ENCODE measurements at regions of chr1 and their contacts with region 1.

Region 1: GRCh38 chr1:42173155-42173933 is 8.8 kb upstream of the GUCA2A start:
- DNase-seq: peak; percentile 28 to 76 (median 57)
- ATAC-seq: peak; percentile 85
- H3K4me3 ChIP-seq: no peak overlapping the region
- H3K4me3 Mint-ChIP-seq: no peak overlapping the region
- H3K27ac ChIP-seq: no peak overlapping the region
- H3K27ac Mint-ChIP-seq: peak overlapping the region in 2 of 9 donors; percentile 17 to 71
- H3K4me1 ChIP-seq: no peaks in the 10 kb centered on the region
- H3K4me1 Mint-ChIP-seq: peaks cover 0 to 3% (median 0%) of the 10 kb centered on the region in 7 donors
- H3K27me3 ChIP-seq: no peaks in the 10 kb centered on the region
- H3K27me3 Mint-ChIP-seq: no peaks in the 10 kb centered on the region

Region 2: GRCh38 chr1:41455479-41456332 is 717.6 kb before region 1 on chr1:
- CTCF ChIA-PET with region 1: no interaction called
- POLR2A ChIA-PET with region 1: no interaction called
- intact Hi-C with region 1: no loop called
- DNase-seq: no peak
- ATAC-seq: no peak
- H3K4me3 ChIP-seq: no peak overlapping the region
- H3K4me3 Mint-ChIP-seq: no peak overlapping the region
- H3K27ac ChIP-seq: no peak overlapping the region
- H3K27ac Mint-ChIP-seq: no peak overlapping the region
- H3K4me1 ChIP-seq: no peaks in the 10 kb centered on the region
- H3K4me1 Mint-ChIP-seq: peaks cover 0 to 2% (median 0%) of the 10 kb centered on the region in 7 donors
- H3K27me3 ChIP-seq: no peaks in the 10 kb centered on the region
- H3K27me3 Mint-ChIP-seq: peaks cover 0 to 11% (median 0%) of the 10 kb centered on the region in 5 donors

Region 3: GRCh38 chr1:41516168-41517061 is 656.9 kb before region 1 on chr1:
- CTCF ChIA-PET with region 1: interaction called, 3 read pairs
- POLR2A ChIA-PET with region 1: no interaction called
- intact Hi-C with region 1: loop called in 1 of 2 experiments (anchors 1 kb)
- DNase-seq: peak in 8 of 9 donors; percentile 6 to 76 (median 42)
- ATAC-seq: peak; percentile 94
- H3K4me3 ChIP-seq: no peak overlapping the region
- H3K4me3 Mint-ChIP-seq: peak overlapping the region in 7 of 10 donors; percentile 47 to 76 (median 58)
- H3K27ac ChIP-seq: no peak overlapping the region
- H3K27ac Mint-ChIP-seq: no peak overlapping the region
- H3K4me1 ChIP-seq: no peaks in the 10 kb centered on the region
- H3K4me1 Mint-ChIP-seq: peaks cover 0 to 13% (median 7%) of the 10 kb centered on the region in 7 donors
- H3K27me3 ChIP-seq: no peaks in the 10 kb centered on the region
- H3K27me3 Mint-ChIP-seq: no peaks in the 10 kb centered on the region

Region 4: GRCh38 chr1:41812051-41812450 is 361.3 kb before region 1 on chr1:
- CTCF ChIA-PET with region 1: interaction called, 6 read pairs
- POLR2A ChIA-PET with region 1: no interaction called
- intact Hi-C with region 1: loop called (anchors 1 to 2 kb)
- DNase-seq: peak in 6 of 9 donors; percentile 23 to 63 (median 47)
- ATAC-seq: peak; percentile 77
- H3K4me3 ChIP-seq: no peak overlapping the region
- H3K4me3 Mint-ChIP-seq: peak overlapping the region in 1 of 10 donors; percentile 29
- H3K27ac ChIP-seq: no peak overlapping the region
- H3K27ac Mint-ChIP-seq: peak overlapping the region in 2 of 9 donors; percentile 21 to 66
- H3K4me1 ChIP-seq: peaks cover 5 to 28% of the 10 kb centered on the region in 2 donors
- H3K4me1 Mint-ChIP-seq: peaks cover 17 to 48% (median 26%) of the 10 kb centered on the region in 7 donors
- H3K27me3 ChIP-seq: no peaks in the 10 kb centered on the region
- H3K27me3 Mint-ChIP-seq: no peaks in the 10 kb centered on the region

Region 5: DNA sequence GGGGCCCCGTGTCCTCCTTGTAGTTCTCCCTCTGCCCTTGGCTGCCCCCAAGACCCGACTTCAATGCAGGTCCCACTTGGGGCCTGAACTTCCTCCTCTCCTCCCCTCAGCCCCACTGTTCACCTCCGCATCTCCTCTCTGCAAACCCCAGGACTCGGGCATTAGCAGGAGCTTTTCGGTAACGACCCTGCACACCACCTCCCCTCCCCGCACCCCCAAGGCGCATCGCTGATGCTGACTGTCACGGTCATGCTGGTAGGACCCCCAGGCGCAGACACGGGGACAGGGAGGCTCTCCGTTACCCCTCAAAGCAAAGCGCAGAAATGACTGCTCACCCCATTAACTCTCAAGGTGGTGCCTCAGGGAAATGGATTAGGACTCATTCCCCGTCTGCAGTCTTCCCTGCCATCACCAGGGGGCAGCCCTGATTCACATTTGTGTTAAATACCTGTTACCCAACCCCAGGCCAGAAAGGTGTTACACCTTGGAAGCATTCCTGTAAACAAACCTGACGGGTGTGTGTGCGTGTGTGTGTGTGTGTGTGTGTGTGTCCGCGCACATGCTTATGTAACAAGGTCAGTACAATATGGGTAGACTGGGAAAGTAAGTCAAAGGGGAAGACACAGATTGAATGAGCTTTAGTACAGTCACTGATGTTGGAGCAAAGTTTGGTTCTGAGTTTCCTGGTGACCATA is 26.6 kb before region 1 on chr1:
- CTCF ChIA-PET with region 1: interaction called, 4 read pairs
- POLR2A ChIA-PET with region 1: no interaction called
- intact Hi-C with region 1: loop called (anchors 1 kb)
- DNase-seq: peak; percentile 30 to 71 (median 61)
- ATAC-seq: peak; percentile 74
- H3K4me3 ChIP-seq: no peak overlapping the region
- H3K4me3 Mint-ChIP-seq: no peak overlapping the region
- H3K27ac ChIP-seq: no peak overlapping the region
- H3K27ac Mint-ChIP-seq: no peak overlapping the region
- H3K4me1 ChIP-seq: no peaks in the 10 kb centered on the region
- H3K4me1 Mint-ChIP-seq: peaks cover 0 to 7% (median 5%) of the 10 kb centered on the region in 7 donors
- H3K27me3 ChIP-seq: peaks cover 0 to 6% of the 10 kb centered on the region in 2 donors
- H3K27me3 Mint-ChIP-seq: peaks cover 3 to 14% (median 11%) of the 10 kb centered on the region in 5 donors

Region 6: DNA sequence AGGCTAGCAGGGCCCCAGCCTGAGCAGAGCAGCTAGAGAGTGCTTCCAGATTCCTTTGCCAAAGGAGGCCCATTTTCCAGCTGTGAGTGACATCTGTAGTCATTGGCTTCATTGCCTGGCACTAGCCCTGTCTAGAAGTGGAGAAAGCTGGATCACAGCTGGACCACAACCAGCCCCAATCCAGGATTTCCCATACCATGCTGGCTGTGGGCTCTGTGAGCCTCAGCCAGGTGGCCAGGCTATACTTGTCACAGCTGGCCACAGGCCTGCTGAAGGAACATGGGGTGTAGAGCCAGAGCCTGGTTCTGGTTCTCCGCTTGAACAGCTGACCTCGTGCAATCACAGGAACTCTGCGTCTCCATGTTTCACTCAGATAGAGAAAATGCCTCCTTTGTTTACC is 243.8 kb after region 1 on chr1:
- CTCF ChIA-PET with region 1: no interaction called
- POLR2A ChIA-PET with region 1: no interaction called
- intact Hi-C with region 1: no loop called
- DNase-seq: no peak
- ATAC-seq: no peak
- H3K4me3 ChIP-seq: no peak overlapping the region
- H3K4me3 Mint-ChIP-seq: no peak overlapping the region
- H3K27ac ChIP-seq: no peak overlapping the region
- H3K27ac Mint-ChIP-seq: no peak overlapping the region
- H3K4me1 ChIP-seq: no peaks in the 10 kb centered on the region
- H3K4me1 Mint-ChIP-seq: no peaks in the 10 kb centered on the region
- H3K27me3 ChIP-seq: no peaks in the 10 kb centered on the region
- H3K27me3 Mint-ChIP-seq: peaks cover 4 to 8% (median 7%) of the 10 kb centered on the region in 5 donors

Region 7: DNA sequence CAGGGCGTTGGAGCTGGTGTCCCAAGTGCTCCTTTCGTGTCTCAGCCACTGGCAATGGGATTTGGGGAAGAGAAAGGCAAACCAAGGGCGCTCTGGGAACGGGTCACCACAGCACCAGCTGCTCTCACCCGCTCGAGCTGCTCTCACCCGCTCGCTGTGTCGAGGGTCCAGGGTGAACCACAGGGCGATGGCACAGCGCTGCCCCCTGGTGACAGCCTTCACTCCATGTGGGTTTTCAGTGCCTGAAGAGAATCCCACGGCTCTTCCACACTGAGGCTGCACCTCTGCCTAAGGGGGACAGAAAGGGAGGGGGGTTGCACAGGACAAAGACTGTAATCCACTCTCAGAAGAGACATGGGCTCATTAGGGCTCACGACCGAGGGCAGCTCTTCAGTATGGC is 573.8 kb after region 1 on chr1:
- CTCF ChIA-PET with region 1: no interaction called
- POLR2A ChIA-PET with region 1: no interaction called
- intact Hi-C with region 1: loop called in 1 of 2 experiments (anchors 10 kb)
- DNase-seq: peak in 6 of 9 donors; percentile 19 to 56 (median 38)
- ATAC-seq: peak; percentile 73
- H3K4me3 ChIP-seq: no peak overlapping the region
- H3K4me3 Mint-ChIP-seq: no peak overlapping the region
- H3K27ac ChIP-seq: no peak overlapping the region
- H3K27ac Mint-ChIP-seq: peak overlapping the region in 1 of 9 donors; percentile 28
- H3K4me1 ChIP-seq: no peaks in the 10 kb centered on the region
- H3K4me1 Mint-ChIP-seq: peaks cover 0 to 3% (median 0%) of the 10 kb centered on the region in 7 donors
- H3K27me3 ChIP-seq: no peaks in the 10 kb centered on the region
- H3K27me3 Mint-ChIP-seq: no peaks in the 10 kb centered on the region